ENCODE measurements at regions of chr12 and their contacts with region 1.

Region 1: GRCh38 chr12:4276524-4277204 is 3.1 kb downstream of the CCND2 start:
- DNase-seq: peak; percentile 67 to 95 (median 83)
- ATAC-seq: peak; percentile 21 to 38 (median 31)
- H3K4me3 ChIP-seq: peak overlapping the region in 1 of 2 donors; percentile 96
- H3K4me3 Mint-ChIP-seq: peak overlapping the region; percentile 92 to 98 (median 96)
- H3K27ac ChIP-seq: no peak overlapping the region
- H3K27ac Mint-ChIP-seq: peak overlapping the region; percentile 90 to 97
- H3K4me1 ChIP-seq: peaks cover 26 to 81% of the 10 kb centered on the region in 2 experiments
- H3K4me1 Mint-ChIP-seq: peaks cover 61 to 67% (median 67%) of the 10 kb centered on the region in 3 donors
- H3K27me3 ChIP-seq: no peaks in the 10 kb centered on the region
- H3K27me3 Mint-ChIP-seq: no peaks in the 10 kb centered on the region

Region 2: DNA sequence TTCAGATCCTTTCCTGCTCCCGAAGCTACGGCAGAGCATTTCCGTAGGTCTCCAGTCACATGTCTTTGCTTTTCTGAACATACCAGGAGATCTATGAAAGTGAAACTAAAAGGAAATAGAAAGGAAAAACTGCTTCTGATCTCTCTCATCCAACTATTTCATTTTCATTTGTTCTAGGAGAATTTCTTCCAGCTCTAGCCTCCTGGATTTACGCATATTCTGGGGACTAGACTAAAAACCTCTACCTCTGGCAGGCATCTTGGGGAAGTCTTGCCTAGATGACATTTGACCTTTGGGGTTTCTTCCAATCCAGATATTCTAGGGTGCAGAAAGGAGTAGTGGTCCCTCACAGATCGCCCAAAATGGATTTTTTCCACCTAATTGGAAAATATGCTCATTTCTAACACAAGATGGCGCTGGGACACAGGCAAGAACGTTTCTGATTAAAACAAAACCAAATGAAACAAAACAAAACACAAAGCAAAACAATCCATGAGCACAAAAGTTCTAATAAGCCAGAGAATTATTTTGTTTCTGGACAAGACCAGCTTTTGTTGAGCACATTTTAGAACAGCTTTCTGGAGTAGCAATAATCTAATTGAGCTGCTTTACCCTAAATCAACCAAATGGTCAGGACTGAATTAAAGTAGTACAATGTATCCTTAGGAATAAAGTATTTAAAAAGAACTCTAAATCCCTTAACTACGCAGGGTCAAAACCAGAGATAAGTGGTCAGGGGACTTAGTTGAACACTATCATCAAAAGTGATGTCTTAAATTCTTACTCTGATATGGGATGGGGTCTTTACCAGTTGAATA is 391.2 kb before region 1 on chr12:
- CTCF ChIA-PET with region 1: interaction called, 50 to 136 read pairs
- POLR2A ChIA-PET with region 1: interaction called in 1 of 2 experiments, 3 read pairs
- DNase-seq: peak in 23 of 35 experiments; percentile 11 to 81 (median 34)
- ATAC-seq: peak in 2 of 4 experiments; percentile 27 to 42
- H3K4me3 ChIP-seq: no peak overlapping the region
- H3K4me3 Mint-ChIP-seq: peak overlapping the region in 1 of 3 donors; percentile 2
- H3K27ac ChIP-seq: no peak overlapping the region
- H3K27ac Mint-ChIP-seq: peak overlapping the region; percentile 7 to 35
- H3K4me1 ChIP-seq: peaks cover 3 to 6% of the 10 kb centered on the region in 2 experiments
- H3K4me1 Mint-ChIP-seq: peaks cover 7 to 15% (median 11%) of the 10 kb centered on the region in 3 donors
- H3K27me3 ChIP-seq: no peaks in the 10 kb centered on the region
- H3K27me3 Mint-ChIP-seq: peaks cover 4% of the 10 kb centered on the region in 2 donors

Region 3: GRCh38 chr12:3988519-3989448 is 287.9 kb before region 1 on chr12:
- CTCF ChIA-PET with region 1: interaction called, 4 to 19 read pairs
- POLR2A ChIA-PET with region 1: no interaction called
- DNase-seq: peak in 26 of 35 experiments; percentile 6 to 55 (median 20)
- ATAC-seq: peak; percentile 93 to 97 (median 96)
- H3K4me3 ChIP-seq: no peak overlapping the region
- H3K4me3 Mint-ChIP-seq: peak overlapping the region; percentile 50 to 71 (median 52)
- H3K27ac ChIP-seq: peak overlapping the region; percentile 56
- H3K27ac Mint-ChIP-seq: peak overlapping the region; percentile 96 to 99
- H3K4me1 ChIP-seq: peaks cover 21 to 22% of the 10 kb centered on the region in 2 experiments
- H3K4me1 Mint-ChIP-seq: peaks cover 28 to 31% (median 29%) of the 10 kb centered on the region in 3 donors
- H3K27me3 ChIP-seq: no peaks in the 10 kb centered on the region
- H3K27me3 Mint-ChIP-seq: no peaks in the 10 kb centered on the region

Region 4: DNA sequence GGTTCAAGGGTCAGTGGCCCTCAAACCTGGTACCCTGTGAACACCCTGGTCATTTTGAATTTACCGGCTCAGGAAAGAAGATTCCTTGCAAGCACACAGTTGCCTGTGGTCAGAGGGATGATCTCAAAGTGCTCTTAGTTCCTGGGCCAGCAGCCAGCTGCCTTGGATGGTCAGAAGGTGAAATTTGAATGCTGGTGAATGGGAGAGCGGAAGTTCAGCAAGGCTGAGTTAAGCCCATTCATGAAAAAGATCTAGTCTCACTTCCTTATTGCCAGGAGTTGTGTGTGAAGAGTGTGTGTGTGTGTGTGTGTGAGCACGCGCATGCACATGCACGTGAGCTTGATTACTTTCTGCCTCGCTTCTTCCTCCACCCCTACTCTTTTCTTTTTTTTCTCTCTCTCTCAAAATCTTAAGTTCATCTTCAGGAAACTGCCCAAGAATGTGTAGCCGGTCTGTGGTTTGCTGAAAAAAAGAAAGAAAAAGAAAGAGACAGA is 158.6 kb before region 1 on chr12:
- CTCF ChIA-PET with region 1: interaction called in 1 of 2 experiments, 8 read pairs
- POLR2A ChIA-PET with region 1: interaction called in 1 of 2 experiments, 11 read pairs
- DNase-seq: peak in 11 of 35 experiments; percentile 8 to 59 (median 17)
- ATAC-seq: peak; percentile 53 to 69 (median 65)
- H3K4me3 ChIP-seq: peak overlapping the region in 1 of 2 donors; percentile 2
- H3K4me3 Mint-ChIP-seq: peak overlapping the region; percentile 50 to 75 (median 69)
- H3K27ac ChIP-seq: peak overlapping the region; percentile 47
- H3K27ac Mint-ChIP-seq: peak overlapping the region; percentile 14 to 72
- H3K4me1 ChIP-seq: peaks cover 19 to 49% of the 10 kb centered on the region in 2 experiments
- H3K4me1 Mint-ChIP-seq: peaks cover 39 to 53% (median 46%) of the 10 kb centered on the region in 3 donors
- H3K27me3 ChIP-seq: peaks cover 0 to 6% of the 10 kb centered on the region in 2 experiments
- H3K27me3 Mint-ChIP-seq: no peaks in the 10 kb centered on the region

Region 5: DNA sequence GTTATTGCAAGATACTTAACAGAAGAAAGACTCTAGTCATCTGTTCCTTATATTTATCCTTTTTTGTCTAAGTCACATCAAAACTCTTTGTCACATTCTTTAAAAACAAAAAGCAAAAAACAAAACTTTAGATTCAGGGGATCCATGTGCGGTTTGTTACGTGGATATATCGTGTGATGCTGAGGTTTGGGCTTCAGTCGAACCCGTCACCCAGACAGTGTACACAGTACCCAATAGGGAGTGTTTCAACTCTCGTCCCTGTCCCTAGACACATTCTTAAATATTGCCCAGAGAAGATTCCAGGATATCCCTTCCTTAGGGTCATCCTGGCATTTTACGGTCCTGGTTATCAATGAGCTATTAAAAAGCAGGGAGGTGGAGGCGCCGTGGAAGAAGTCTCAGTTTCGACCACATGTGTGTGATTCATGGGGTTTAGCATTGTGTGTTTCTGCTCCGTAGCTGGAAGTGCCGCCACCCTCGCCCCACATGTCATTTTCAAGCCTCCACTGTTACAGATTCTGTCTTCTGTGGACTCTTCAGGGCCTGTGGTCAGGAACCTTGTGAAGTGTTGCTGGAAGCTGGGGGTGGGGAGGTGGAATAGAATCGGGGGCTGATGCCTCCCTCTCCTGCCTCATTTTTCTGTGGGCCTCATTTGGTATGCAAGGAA is 16.8 kb after region 1 on chr12:
- CTCF ChIA-PET with region 1: interaction called in 1 of 2 experiments, 14 read pairs
- POLR2A ChIA-PET with region 1: interaction called, 3 to 4 read pairs
- DNase-seq: peak in 3 of 35 experiments; percentile 12 to 22 (median 17)
- ATAC-seq: peak; percentile 40 to 69 (median 58)
- H3K4me3 ChIP-seq: no peak overlapping the region
- H3K4me3 Mint-ChIP-seq: peak overlapping the region; percentile 49 to 67 (median 66)
- H3K27ac ChIP-seq: peak overlapping the region; percentile 48
- H3K27ac Mint-ChIP-seq: peak overlapping the region; percentile 95 to 99
- H3K4me1 ChIP-seq: peaks cover 9 to 62% of the 10 kb centered on the region in 2 experiments
- H3K4me1 Mint-ChIP-seq: peaks cover 60 to 80% (median 77%) of the 10 kb centered on the region in 3 donors
- H3K27me3 ChIP-seq: no peaks in the 10 kb centered on the region
- H3K27me3 Mint-ChIP-seq: no peaks in the 10 kb centered on the region

Region 6: GRCh38 chr12:5200278-5201087 is 923.8 kb after region 1 on chr12:
- CTCF ChIA-PET with region 1: no interaction called
- POLR2A ChIA-PET with region 1: no interaction called
- DNase-seq: peak in 2 of 35 experiments; percentile 2 to 4
- ATAC-seq: no peak
- H3K4me3 ChIP-seq: no peak overlapping the region
- H3K4me3 Mint-ChIP-seq: no peak overlapping the region
- H3K27ac ChIP-seq: no peak overlapping the region
- H3K27ac Mint-ChIP-seq: no peak overlapping the region
- H3K4me1 ChIP-seq: no peaks in the 10 kb centered on the region
- H3K4me1 Mint-ChIP-seq: no peaks in the 10 kb centered on the region
- H3K27me3 ChIP-seq: peaks cover 0 to 17% of the 10 kb centered on the region in 2 experiments
- H3K27me3 Mint-ChIP-seq: peaks cover 15 to 16% of the 10 kb centered on the region in 2 donors

Measured in T-cell (primary cell).